ENCODE measurements at regions of chr22 and their contacts with region 1.

Region 1: GRCh38 chr22:22745225-22746060 is 101.0 kb downstream of the GGTLC2 start:
- DNase-seq: peak; percentile 57
- H3K4me3 Mint-ChIP-seq: no peak overlapping the region
- H3K27ac Mint-ChIP-seq: no peak overlapping the region
- H3K4me1 Mint-ChIP-seq: no peaks in the 10 kb centered on the region
- H3K27me3 Mint-ChIP-seq: peaks cover 39% of the 10 kb centered on the region

Region 2: DNA sequence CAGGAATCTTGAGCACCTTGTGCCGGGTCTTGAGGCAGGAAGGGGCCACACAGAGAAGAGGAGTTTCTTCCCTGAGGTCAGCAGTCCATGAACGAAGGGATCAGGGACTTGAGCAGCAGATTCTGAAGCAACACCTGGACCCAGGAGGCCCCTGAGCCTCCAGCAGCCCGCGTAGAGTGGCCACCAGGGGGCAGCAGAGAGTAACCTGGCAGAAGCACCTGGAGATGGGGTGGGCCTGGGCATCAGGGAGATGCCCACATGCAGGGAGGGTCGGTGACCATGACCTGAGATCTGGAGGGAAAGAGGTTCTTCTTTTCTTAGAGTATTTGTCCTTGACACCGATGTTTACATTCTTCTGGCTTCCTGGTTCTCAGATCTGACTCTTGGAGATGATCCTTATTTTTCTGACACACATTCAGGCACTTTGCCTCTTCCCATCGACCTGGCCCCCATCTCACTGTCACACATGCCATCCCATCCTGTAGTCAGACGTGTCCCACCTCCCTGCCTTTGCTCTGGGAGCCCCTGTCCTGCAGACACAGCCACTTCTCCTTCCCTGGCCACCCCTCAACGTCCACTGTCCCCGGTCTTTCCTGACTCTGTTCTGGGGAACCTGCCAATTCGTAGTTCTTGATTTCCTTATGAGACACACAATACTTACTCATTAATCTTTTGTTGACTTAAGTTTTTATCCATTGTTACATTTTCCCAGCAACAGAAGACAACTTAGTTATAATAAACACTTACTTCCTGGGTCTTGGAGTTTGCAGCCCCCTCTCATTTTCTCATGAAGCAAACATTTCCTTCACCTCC is 34.5 kb before region 1 on chr22:
- CTCF ChIA-PET with region 1: interaction called, 16 read pairs
- DNase-seq: peak; percentile 83
- H3K4me3 Mint-ChIP-seq: no peak overlapping the region
- H3K27ac Mint-ChIP-seq: no peak overlapping the region
- H3K4me1 Mint-ChIP-seq: no peaks in the 10 kb centered on the region
- H3K27me3 Mint-ChIP-seq: peaks cover 41% of the 10 kb centered on the region

Region 3: GRCh38 chr22:22720201-22720723 is 25.2 kb before region 1 on chr22:
- CTCF ChIA-PET with region 1: interaction called, 36 read pairs
- DNase-seq: peak; percentile 53
- H3K4me3 Mint-ChIP-seq: no peak overlapping the region
- H3K27ac Mint-ChIP-seq: peak overlapping the region; percentile 39
- H3K4me1 Mint-ChIP-seq: peaks cover 5% of the 10 kb centered on the region
- H3K27me3 Mint-ChIP-seq: peaks cover 13% of the 10 kb centered on the region

Region 4: DNA sequence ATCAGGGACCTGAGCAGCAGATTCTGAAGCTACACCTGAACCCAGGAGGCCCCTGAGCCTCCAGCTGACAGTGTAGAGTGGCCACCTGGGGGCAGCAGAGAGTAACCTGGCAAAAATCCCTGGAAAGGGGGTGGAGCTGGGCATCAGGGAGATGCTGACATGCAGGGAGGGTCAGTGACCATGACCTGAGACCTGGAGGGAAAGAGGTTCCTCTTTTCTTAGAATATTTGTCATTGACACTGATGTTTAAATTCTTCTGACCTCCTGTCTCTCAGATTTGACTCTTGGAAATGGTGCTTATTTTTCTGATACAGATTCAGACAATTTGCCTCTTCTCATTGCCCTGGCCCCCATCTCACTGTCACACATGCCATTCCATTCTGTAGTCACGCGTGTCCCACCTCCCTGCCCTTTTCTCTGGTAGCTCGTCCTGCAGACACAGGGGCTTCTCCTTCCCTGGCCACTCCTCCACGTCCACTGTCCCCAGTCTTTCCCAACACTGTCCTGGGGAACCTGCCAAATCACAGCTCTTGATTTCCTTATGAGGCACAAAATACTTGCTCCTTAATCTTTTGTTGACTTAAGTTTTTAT is 24.9 kb after region 1 on chr22:
- CTCF ChIA-PET with region 1: interaction called, 28 read pairs
- DNase-seq: peak; percentile 64
- H3K4me3 Mint-ChIP-seq: no peak overlapping the region
- H3K27ac Mint-ChIP-seq: no peak overlapping the region
- H3K4me1 Mint-ChIP-seq: no peaks in the 10 kb centered on the region
- H3K27me3 Mint-ChIP-seq: peaks cover 61% of the 10 kb centered on the region

Measured in activated naive CD4-positive, alpha-beta T cell treated with anti-CD3 and anti-CD28 coated beads, Interleukin-2, amount 10 ng/mL, durations not matched to agents 7 days and 5 days (primary cell).